Naive thymus-derived CD4-positive, alpha-beta T cell (primary cell): ENCODE measurements at regions of chr2 and their contacts with region 1.

Region 1: DNA sequence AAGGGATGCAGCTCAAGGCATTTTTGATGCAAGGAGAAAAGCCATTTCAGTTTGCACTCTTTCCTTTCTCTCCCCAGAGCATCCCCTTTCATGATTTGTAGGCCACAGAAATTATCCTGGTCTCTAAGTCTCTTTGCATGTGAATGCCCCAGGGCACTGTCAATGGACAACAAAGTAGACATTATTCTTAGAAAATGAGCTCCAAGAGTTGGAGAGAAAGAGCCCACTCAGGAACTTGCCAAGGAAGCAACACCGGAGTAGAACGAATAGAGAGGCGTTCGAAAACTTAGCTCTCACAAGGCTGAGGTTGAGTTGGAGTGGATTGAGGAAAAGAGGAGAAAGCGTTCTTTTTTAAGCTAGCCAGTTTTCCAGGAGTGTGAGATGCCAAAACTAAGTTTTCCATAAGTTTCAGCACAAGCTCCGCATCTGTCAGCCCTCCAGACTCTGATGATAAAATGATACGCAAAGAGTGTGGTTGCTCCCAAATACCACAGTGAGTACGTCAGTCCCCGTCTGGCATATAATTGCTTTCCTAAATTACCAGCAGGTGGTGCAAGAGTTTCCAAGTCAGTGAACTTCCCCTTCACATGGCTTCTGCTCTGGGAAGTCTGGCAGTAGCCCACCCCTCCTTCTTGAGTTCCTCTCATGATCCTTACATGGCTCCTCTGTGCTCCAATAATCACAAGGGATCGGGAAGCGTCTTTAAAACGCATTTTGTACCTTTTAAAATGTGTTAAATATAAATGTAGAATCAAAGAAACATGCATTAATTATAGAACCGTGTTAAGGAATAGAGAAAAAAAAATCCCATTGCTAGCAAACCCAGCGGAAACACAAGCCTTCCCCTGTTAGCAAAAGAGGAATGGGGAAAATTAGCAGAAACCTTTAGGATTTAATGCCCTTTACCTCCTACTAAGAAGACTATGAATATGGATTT is 1060.6 kb upstream of the FANCL start:
- DNase-seq: peak in 5 of 9 donors; percentile 23 to 54 (median 36)
- ATAC-seq: peak; percentile 74
- H3K4me3 ChIP-seq: no peak overlapping the region
- H3K4me3 Mint-ChIP-seq: no peak overlapping the region
- H3K27ac ChIP-seq: no peak overlapping the region
- H3K27ac Mint-ChIP-seq: no peak overlapping the region
- H3K4me1 ChIP-seq: no peaks in the 10 kb centered on the region
- H3K4me1 Mint-ChIP-seq: no peaks in the 10 kb centered on the region
- H3K27me3 ChIP-seq: no peaks in the 10 kb centered on the region
- H3K27me3 Mint-ChIP-seq: peaks cover 0 to 23% (median 5%) of the 10 kb centered on the region in 5 donors

Region 2: DNA sequence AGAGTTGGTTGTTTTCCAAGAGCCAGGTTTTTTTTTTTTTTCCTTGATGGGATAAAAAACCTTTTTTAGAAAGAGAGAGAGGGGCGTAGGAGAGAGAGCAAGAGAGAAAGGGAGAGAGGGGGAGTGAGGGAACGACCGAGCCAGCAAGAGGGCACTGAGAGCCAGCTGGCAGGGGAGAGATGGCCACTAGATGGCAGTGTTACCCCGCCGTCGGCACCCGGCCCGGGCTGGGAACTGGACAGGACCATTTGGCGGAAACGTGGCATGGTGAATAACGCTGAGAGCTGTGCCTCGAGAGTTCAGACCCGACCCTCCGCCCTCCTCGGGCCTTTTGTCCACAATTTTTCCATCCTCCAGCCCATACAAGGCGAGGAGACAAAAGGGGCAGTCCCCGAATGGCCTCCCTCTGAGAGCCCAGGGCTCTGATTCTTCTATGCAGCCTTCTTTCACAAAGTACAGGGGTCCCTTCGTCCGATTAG is 1541.9 kb before region 1 on chr2:
- CTCF ChIA-PET with region 1: no interaction called
- POLR2A ChIA-PET with region 1: no interaction called
- intact Hi-C with region 1: loop called in 1 of 2 experiments (anchors 2 kb)
- DNase-seq: peak; percentile 23 to 80 (median 64)
- ATAC-seq: peak; percentile 83
- H3K4me3 ChIP-seq: no peak overlapping the region
- H3K4me3 Mint-ChIP-seq: peak overlapping the region in 5 of 10 donors; percentile 9 to 44 (median 20)
- H3K27ac ChIP-seq: no peak overlapping the region
- H3K27ac Mint-ChIP-seq: no peak overlapping the region
- H3K4me1 ChIP-seq: peaks cover 0 to 7% of the 10 kb centered on the region in 2 donors
- H3K4me1 Mint-ChIP-seq: peaks cover 0 to 3% (median 0%) of the 10 kb centered on the region in 7 donors
- H3K27me3 ChIP-seq: no peaks in the 10 kb centered on the region
- H3K27me3 Mint-ChIP-seq: peaks cover 0 to 17% (median 5%) of the 10 kb centered on the region in 5 donors

Region 3: GRCh38 chr2:59684116-59684770 is 382.5 kb after region 1 on chr2:
- CTCF ChIA-PET with region 1: no interaction called
- POLR2A ChIA-PET with region 1: no interaction called
- intact Hi-C with region 1: no loop called
- DNase-seq: peak in 2 of 9 donors; percentile 0 to 8
- ATAC-seq: no peak
- H3K4me3 ChIP-seq: no peak overlapping the region
- H3K4me3 Mint-ChIP-seq: no peak overlapping the region
- H3K27ac ChIP-seq: no peak overlapping the region
- H3K27ac Mint-ChIP-seq: no peak overlapping the region
- H3K4me1 ChIP-seq: no peaks in the 10 kb centered on the region
- H3K4me1 Mint-ChIP-seq: no peaks in the 10 kb centered on the region
- H3K27me3 ChIP-seq: no peaks in the 10 kb centered on the region
- H3K27me3 Mint-ChIP-seq: peaks cover 0 to 20% (median 8%) of the 10 kb centered on the region in 5 donors

Region 4: GRCh38 chr2:59932341-59932740 is 630.6 kb after region 1 on chr2:
- CTCF ChIA-PET with region 1: no interaction called
- POLR2A ChIA-PET with region 1: no interaction called
- intact Hi-C with region 1: loop called in 1 of 2 experiments (anchors 1 kb)
- DNase-seq: no peak
- ATAC-seq: no peak
- H3K4me3 ChIP-seq: no peak overlapping the region
- H3K4me3 Mint-ChIP-seq: no peak overlapping the region
- H3K27ac ChIP-seq: no peak overlapping the region
- H3K27ac Mint-ChIP-seq: no peak overlapping the region
- H3K4me1 ChIP-seq: no peaks in the 10 kb centered on the region
- H3K4me1 Mint-ChIP-seq: peaks cover 0 to 8% (median 4%) of the 10 kb centered on the region in 7 donors
- H3K27me3 ChIP-seq: no peaks in the 10 kb centered on the region
- H3K27me3 Mint-ChIP-seq: no peaks in the 10 kb centered on the region

Region 5: GRCh38 chr2:60119791-60120190 is 818.1 kb after region 1 on chr2:
- CTCF ChIA-PET with region 1: no interaction called
- POLR2A ChIA-PET with region 1: no interaction called
- intact Hi-C with region 1: loop called in 1 of 2 experiments (anchors 2 kb)
- DNase-seq: no peak
- ATAC-seq: no peak
- H3K4me3 ChIP-seq: no peak overlapping the region
- H3K4me3 Mint-ChIP-seq: no peak overlapping the region
- H3K27ac ChIP-seq: no peak overlapping the region
- H3K27ac Mint-ChIP-seq: no peak overlapping the region
- H3K4me1 ChIP-seq: no peaks in the 10 kb centered on the region
- H3K4me1 Mint-ChIP-seq: no peaks in the 10 kb centered on the region
- H3K27me3 ChIP-seq: no peaks in the 10 kb centered on the region
- H3K27me3 Mint-ChIP-seq: peaks cover 2 to 25% (median 14%) of the 10 kb centered on the region in 5 donors

Region 6: DNA sequence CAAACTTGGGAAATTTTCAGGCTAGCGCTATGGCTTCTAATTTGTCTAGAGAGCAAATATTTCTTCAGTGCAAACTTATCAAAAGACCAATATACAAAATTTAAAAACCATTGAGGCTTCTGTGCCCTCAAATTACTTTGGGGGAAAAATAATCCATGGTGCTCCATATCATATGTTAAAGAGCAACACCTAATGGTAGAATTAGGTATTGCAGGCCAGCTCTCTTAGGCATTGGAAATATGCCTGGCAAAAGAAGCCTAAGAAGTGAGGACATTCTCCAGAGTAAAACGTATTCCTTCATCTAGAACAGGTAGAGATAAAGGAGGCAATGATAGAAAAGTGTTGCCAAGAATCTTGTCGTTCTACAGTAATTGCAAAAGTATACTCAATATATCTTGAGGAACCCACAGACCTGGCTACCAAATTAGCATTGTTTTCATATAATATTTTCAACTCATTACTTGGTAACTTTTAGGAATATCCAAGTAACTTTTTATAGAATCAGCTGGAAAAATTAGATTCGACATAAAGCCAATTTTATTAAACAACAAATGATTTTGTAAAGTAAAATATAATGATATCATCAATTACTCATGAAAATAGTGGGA is 850.6 kb after region 1 on chr2:
- CTCF ChIA-PET with region 1: interaction called, 4 read pairs
- POLR2A ChIA-PET with region 1: no interaction called
- intact Hi-C with region 1: loop called in 1 of 2 experiments (anchors 1 kb)
- DNase-seq: peak in 5 of 9 donors; percentile 9 to 36 (median 20)
- ATAC-seq: peak; percentile 49
- H3K4me3 ChIP-seq: no peak overlapping the region
- H3K4me3 Mint-ChIP-seq: no peak overlapping the region
- H3K27ac ChIP-seq: no peak overlapping the region
- H3K27ac Mint-ChIP-seq: no peak overlapping the region
- H3K4me1 ChIP-seq: no peaks in the 10 kb centered on the region
- H3K4me1 Mint-ChIP-seq: peaks cover 0 to 9% (median 4%) of the 10 kb centered on the region in 7 donors
- H3K27me3 ChIP-seq: no peaks in the 10 kb centered on the region
- H3K27me3 Mint-ChIP-seq: peaks cover 0 to 14% (median 7%) of the 10 kb centered on the region in 5 donors

Region 7: GRCh38 chr2:60550178-60550983 is 1248.6 kb after region 1 on chr2:
- CTCF ChIA-PET with region 1: no interaction called
- POLR2A ChIA-PET with region 1: no interaction called
- intact Hi-C with region 1: loop called (anchors 1 kb)
- DNase-seq: peak in 8 of 9 donors; percentile 23 to 67 (median 50)
- ATAC-seq: peak; percentile 71
- H3K4me3 ChIP-seq: peak overlapping the region; percentile 70
- H3K4me3 Mint-ChIP-seq: peak overlapping the region; percentile 80 to 93 (median 90)
- H3K27ac ChIP-seq: peak overlapping the region; percentile 39
- H3K27ac Mint-ChIP-seq: peak overlapping the region in 6 of 9 donors; percentile 29 to 89 (median 68)
- H3K4me1 ChIP-seq: peaks cover 9 to 17% of the 10 kb centered on the region in 2 donors
- H3K4me1 Mint-ChIP-seq: peaks cover 11 to 57% (median 34%) of the 10 kb centered on the region in 7 donors
- H3K27me3 ChIP-seq: peaks cover 10 to 39% of the 10 kb centered on the region in 2 donors
- H3K27me3 Mint-ChIP-seq: peaks cover 46 to 87% (median 55%) of the 10 kb centered on the region in 5 donors

Region 8: GRCh38 chr2:60581433-60582282 is 1279.9 kb after region 1 on chr2:
- CTCF ChIA-PET with region 1: no interaction called
- POLR2A ChIA-PET with region 1: no interaction called
- intact Hi-C with region 1: loop called (anchors 2 kb)
- DNase-seq: peak in 8 of 9 donors; percentile 24 to 78 (median 62)
- ATAC-seq: peak; percentile 96
- H3K4me3 ChIP-seq: no peak overlapping the region
- H3K4me3 Mint-ChIP-seq: peak overlapping the region in 9 of 10 donors; percentile 9 to 54 (median 38)
- H3K27ac ChIP-seq: no peak overlapping the region
- H3K27ac Mint-ChIP-seq: no peak overlapping the region
- H3K4me1 ChIP-seq: no peaks in the 10 kb centered on the region
- H3K4me1 Mint-ChIP-seq: peaks cover 0 to 9% (median 0%) of the 10 kb centered on the region in 7 donors
- H3K27me3 ChIP-seq: peaks cover 3 to 9% of the 10 kb centered on the region in 2 donors
- H3K27me3 Mint-ChIP-seq: peaks cover 41 to 67% (median 52%) of the 10 kb centered on the region in 5 donors